Posterior vena cava (tissue), 2 donors: ENCODE measurements at regions of chr11 and their contacts with region 1.

Region 1: GRCh38 chr11:74321487-74322188 is 10.2 kb upstream of the P4HA3 start:
- DNase-seq: no peak

Region 2: GRCh38 chr11:74278721-74279161 is 42.9 kb before region 1 on chr11:
- intact Hi-C with region 1: loop called in 1 of 2 experiments (anchors 5 kb)
- DNase-seq: peak; percentile 96

Region 3: GRCh38 chr11:74371279-74372049 is 49.8 kb after region 1 on chr11:
- intact Hi-C with region 1: no loop called
- DNase-seq: no peak

Region 4: GRCh38 chr11:76140912-76141574 is 1819.4 kb after region 1 on chr11:
- intact Hi-C with region 1: no loop called
- DNase-seq: no peak